Ascending aorta (tissue), 2 donors: ENCODE measurements at regions of chr6 and their contacts with region 1.

Region 1: GRCh38 chr6:56714982-56715456 is 72.3 kb upstream of the DST start:
- DNase-seq: peak in 1 of 2 donors; percentile 73
- H3K4me3 ChIP-seq: no peak overlapping the region
- H3K27ac ChIP-seq: peak overlapping the region; percentile 56 to 77
- H3K4me1 ChIP-seq: peaks cover 2 to 25% of the 10 kb centered on the region in 2 donors
- H3K27me3 ChIP-seq: no peaks in the 10 kb centered on the region
- CTCF ChIP-seq: no peak

Region 2: GRCh38 chr6:56730663-56731529 is 15.9 kb after region 1 on chr6:
- intact Hi-C with region 1: loop called (anchors 2 kb)
- DNase-seq: no peak
- H3K4me3 ChIP-seq: no peak overlapping the region
- H3K27ac ChIP-seq: peak overlapping the region; percentile 39 to 67
- H3K4me1 ChIP-seq: peaks cover 7 to 26% of the 10 kb centered on the region in 2 donors
- H3K27me3 ChIP-seq: no peaks in the 10 kb centered on the region
- CTCF ChIP-seq: no peak

Region 3: GRCh38 chr6:56757588-56757984 is 42.6 kb after region 1 on chr6:
- intact Hi-C with region 1: loop called (anchors 5 kb)
- DNase-seq: no peak
- H3K4me3 ChIP-seq: no peak overlapping the region
- H3K27ac ChIP-seq: peak overlapping the region; percentile 6 to 43
- H3K4me1 ChIP-seq: peaks cover 0 to 31% of the 10 kb centered on the region in 2 donors
- H3K27me3 ChIP-seq: no peaks in the 10 kb centered on the region
- CTCF ChIP-seq: peak; percentile 31 to 51 (median 38)